ENCODE measurements at regions of chr11 and their contacts with region 1.

Region 1: GRCh38 chr11:12043959-12044819 is 35.8 kb upstream of the DKK3 start:
- DNase-seq: peak; percentile 61 to 76
- ATAC-seq: peak; percentile 81

Region 2: GRCh38 chr11:11798586-11799438 is 245.4 kb before region 1 on chr11:
- intact Hi-C with region 1: loop called in 1 of 2 experiments (anchors 5 kb)
- DNase-seq: peak; percentile 73 to 93
- ATAC-seq: peak; percentile 98

Region 3: GRCh38 chr11:11931461-11932055 is 112.6 kb before region 1 on chr11:
- intact Hi-C with region 1: loop called in 1 of 2 experiments (anchors 5 kb)
- DNase-seq: no peak
- ATAC-seq: peak; percentile 64

Measured in left colon (tissue), 2 donors.